Mammary epithelial cell (primary cell): ENCODE measurements at regions of chr17 and their contacts with region 1.

Region 1: DNA sequence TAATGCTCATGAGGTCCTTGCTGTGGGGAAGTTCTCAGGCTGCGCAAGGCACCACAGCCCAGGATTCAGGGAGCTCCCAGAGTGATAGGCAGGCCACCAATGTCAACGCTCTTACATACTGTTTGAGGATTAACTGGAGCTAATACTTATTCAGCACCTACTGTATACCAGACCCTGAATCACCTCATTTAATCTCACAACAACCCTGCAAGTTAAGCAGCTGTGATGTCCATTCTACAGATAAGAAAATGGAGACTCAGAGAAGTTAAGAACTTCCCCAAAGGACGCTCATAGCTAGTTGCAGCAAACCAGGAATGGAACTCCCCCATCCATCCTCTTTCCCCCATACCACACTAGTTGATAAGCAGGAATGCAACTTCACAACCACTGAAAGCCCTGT is 25.5 kb upstream of the CCR7 start:
- DNase-seq: no peak
- H3K4me3 ChIP-seq: no peak overlapping the region
- H3K27ac ChIP-seq: no peak overlapping the region
- H3K4me1 ChIP-seq: no peaks in the 10 kb centered on the region
- H3K27me3 ChIP-seq: peaks cover 3% of the 10 kb centered on the region
- CTCF ChIP-seq: no peak

Region 2: GRCh38 chr17:40542558-40543411 is 48.0 kb before region 1 on chr17:
- CTCF ChIA-PET with region 1: no interaction called
- dilution Hi-C with region 1: no loop called
- in situ Hi-C with region 1: no loop called
- intact Hi-C with region 1: no loop called
- DNase-seq: peak; percentile 96
- H3K4me3 ChIP-seq: no peak overlapping the region
- H3K27ac ChIP-seq: peak overlapping the region; percentile 87
- H3K4me1 ChIP-seq: peaks cover 62% of the 10 kb centered on the region
- H3K27me3 ChIP-seq: no peaks in the 10 kb centered on the region
- CTCF ChIP-seq: no peak

Region 3: GRCh38 chr17:40622509-40622928 is 31.8 kb after region 1 on chr17:
- CTCF ChIA-PET with region 1: no interaction called
- dilution Hi-C with region 1: loop called (anchors 5 kb)
- in situ Hi-C with region 1: no loop called
- intact Hi-C with region 1: no loop called
- DNase-seq: no peak
- H3K4me3 ChIP-seq: no peak overlapping the region
- H3K27ac ChIP-seq: no peak overlapping the region
- H3K4me1 ChIP-seq: peaks cover 2% of the 10 kb centered on the region
- H3K27me3 ChIP-seq: no peaks in the 10 kb centered on the region
- CTCF ChIP-seq: no peak